ENCODE measurements at regions of chrX and their contacts with region 1.

Region 1: GRCh38 chrX:38985375-38985774 is 184.1 kb downstream of the MID1IP1 start:
- DNase-seq: no peak
- H3K4me3 Mint-ChIP-seq: no peak overlapping the region
- H3K27ac Mint-ChIP-seq: no peak overlapping the region
- H3K4me1 Mint-ChIP-seq: peaks cover 5% of the 10 kb centered on the region
- H3K27me3 Mint-ChIP-seq: no peaks in the 10 kb centered on the region

Region 2: GRCh38 chrX:38754102-38754790 is 231.1 kb before region 1 on chrX:
- intact Hi-C with region 1: loop called (anchors 10 kb)
- DNase-seq: no peak
- H3K4me3 Mint-ChIP-seq: no peak overlapping the region
- H3K27ac Mint-ChIP-seq: no peak overlapping the region
- H3K4me1 Mint-ChIP-seq: no peaks in the 10 kb centered on the region
- H3K27me3 Mint-ChIP-seq: no peaks in the 10 kb centered on the region